ENCODE measurements at regions of chr20 and their contacts with region 1.

Region 1: GRCh38 chr20:1894951-1895673 is at the start of gene SIRPA:
- DNase-seq: peak; percentile 53 to 63
- H3K4me3 ChIP-seq: peak within 1 kb of the TSS; percentile 66
- H3K4me3 Mint-ChIP-seq: peak within 1 kb of the TSS; percentile 84
- H3K27ac Mint-ChIP-seq: peak within 1 kb of the TSS; percentile 84
- H3K4me1 ChIP-seq: peaks cover 39% of the 10 kb centered on the region
- H3K4me1 Mint-ChIP-seq: peaks cover 44% of the 10 kb centered on the region
- H3K27me3 ChIP-seq: no peaks in the 10 kb centered on the region
- H3K27me3 Mint-ChIP-seq: no peaks in the 10 kb centered on the region
- CTCF ChIP-seq: no peak
- total RNA-seq, gene SIRPA: 31.6 and 33.3 TPM in 2 replicates

Region 2: DNA sequence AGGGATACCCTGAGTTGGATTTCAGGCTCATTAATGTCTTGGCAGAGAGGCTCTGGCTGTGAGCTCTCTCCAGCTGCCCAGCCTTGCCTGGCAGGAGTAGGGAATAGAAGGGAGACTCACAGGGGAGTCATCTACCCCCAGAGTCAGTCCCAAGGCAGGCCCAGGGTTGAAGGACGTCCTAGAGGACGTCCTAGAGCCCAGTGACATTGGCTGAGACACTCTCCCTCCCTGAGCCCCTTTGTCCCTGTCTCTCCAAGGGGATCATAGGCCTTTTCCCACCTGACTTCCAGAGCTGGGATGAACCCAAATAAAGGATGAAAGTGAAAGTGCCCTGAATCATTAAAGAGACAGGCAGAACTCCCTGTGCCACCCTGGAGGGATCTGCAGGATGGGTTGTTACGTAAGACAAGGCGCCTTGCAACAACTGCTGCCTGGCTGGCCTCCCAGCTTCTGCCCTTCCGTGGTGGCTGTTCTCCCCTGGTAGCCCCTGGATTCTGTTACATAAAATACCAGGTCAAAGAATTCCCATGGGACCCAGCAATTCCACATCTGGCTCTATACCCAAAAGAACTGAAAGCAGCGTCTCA is 53.5 kb before region 1 on chr20:
- CTCF ChIA-PET with region 1: no interaction called
- POLR2A ChIA-PET with region 1: no interaction called
- intact Hi-C with region 1: no loop called
- DNase-seq: no peak
- H3K4me3 ChIP-seq: no peak overlapping the region
- H3K4me3 Mint-ChIP-seq: no peak overlapping the region
- H3K27ac Mint-ChIP-seq: no peak overlapping the region
- H3K4me1 ChIP-seq: peaks cover 10% of the 10 kb centered on the region
- H3K4me1 Mint-ChIP-seq: peaks cover 18% of the 10 kb centered on the region
- H3K27me3 ChIP-seq: no peaks in the 10 kb centered on the region
- H3K27me3 Mint-ChIP-seq: no peaks in the 10 kb centered on the region
- CTCF ChIP-seq: no peak

Region 3: DNA sequence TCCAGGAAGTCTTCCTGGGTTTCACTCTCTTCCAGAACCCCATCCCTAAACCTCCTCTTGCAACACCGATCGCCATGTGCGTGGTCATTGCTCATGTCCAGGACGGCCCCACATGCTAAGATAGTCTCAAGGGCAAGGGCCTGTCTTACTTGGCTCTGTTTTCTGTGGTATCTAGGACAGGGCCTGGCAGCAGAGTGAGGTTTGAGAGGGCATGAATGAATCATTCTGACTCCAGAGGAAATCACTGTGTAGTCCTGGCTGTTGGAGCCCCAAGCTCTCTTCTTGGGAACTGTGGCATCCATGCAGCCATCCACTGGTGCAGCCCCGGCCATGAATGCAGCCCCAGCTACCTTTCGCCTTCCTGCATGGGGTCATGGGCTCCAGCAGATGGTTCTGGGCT is 12.5 kb after region 1 on chr20:
- CTCF ChIA-PET with region 1: no interaction called
- POLR2A ChIA-PET with region 1: no interaction called
- intact Hi-C with region 1: no loop called
- DNase-seq: no peak
- H3K4me3 ChIP-seq: no peak overlapping the region
- H3K4me3 Mint-ChIP-seq: no peak overlapping the region
- H3K27ac Mint-ChIP-seq: no peak overlapping the region
- H3K4me1 ChIP-seq: no peaks in the 10 kb centered on the region
- H3K4me1 Mint-ChIP-seq: no peaks in the 10 kb centered on the region
- H3K27me3 ChIP-seq: no peaks in the 10 kb centered on the region
- H3K27me3 Mint-ChIP-seq: no peaks in the 10 kb centered on the region
- CTCF ChIP-seq: no peak

Region 4: DNA sequence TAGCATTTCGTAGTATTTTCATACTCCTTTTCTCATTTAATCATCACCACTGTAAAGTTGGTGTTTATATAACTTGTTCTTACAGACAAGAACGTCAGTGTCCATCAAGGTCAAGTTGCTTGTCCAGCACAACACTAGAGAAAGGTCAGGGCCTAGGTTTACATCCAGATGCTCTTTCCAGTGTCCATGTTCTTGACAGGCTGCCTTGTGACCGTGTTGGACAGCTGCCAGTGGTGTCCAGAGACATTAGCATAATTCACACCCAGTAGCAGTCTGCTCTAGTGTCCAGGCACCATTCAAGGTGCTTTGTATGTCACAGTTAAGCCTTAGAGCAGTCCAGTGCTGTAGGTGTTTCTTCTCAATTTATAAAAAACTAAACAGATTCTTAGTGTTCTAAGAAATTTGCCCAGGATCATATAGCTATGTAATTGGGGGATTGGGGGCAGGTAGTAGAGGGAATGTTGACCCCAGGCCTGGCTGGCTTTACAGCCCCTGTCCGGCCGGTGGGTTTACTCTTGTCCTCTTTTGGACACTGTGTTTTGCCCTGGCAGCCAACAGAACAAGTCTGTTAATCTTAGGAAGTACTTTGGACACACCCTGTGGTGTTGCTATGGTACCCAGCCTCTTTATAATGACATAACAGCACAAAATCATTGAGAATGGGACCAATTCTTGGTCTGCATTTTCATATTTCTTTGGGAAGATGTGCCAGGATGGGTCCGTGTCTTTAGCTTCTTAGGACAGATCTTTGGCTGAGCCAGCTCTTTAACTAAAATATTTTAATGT is 214.5 kb after region 1 on chr20:
- CTCF ChIA-PET with region 1: no interaction called
- POLR2A ChIA-PET with region 1: no interaction called
- intact Hi-C with region 1: loop called (anchors 10 kb)
- DNase-seq: no peak
- H3K4me3 ChIP-seq: no peak overlapping the region
- H3K4me3 Mint-ChIP-seq: no peak overlapping the region
- H3K27ac Mint-ChIP-seq: peak overlapping the region; percentile 57
- H3K4me1 ChIP-seq: peaks cover 9% of the 10 kb centered on the region; the same call in 1 of the 2 replicates
- H3K4me1 Mint-ChIP-seq: peaks cover 21% of the 10 kb centered on the region
- H3K27me3 ChIP-seq: no peaks in the 10 kb centered on the region
- H3K27me3 Mint-ChIP-seq: no peaks in the 10 kb centered on the region
- CTCF ChIP-seq: no peak

Measured in Caco-2 (cell line).